ENCODE measurements at regions of chr10 and their contacts with region 1.

Region 1: DNA sequence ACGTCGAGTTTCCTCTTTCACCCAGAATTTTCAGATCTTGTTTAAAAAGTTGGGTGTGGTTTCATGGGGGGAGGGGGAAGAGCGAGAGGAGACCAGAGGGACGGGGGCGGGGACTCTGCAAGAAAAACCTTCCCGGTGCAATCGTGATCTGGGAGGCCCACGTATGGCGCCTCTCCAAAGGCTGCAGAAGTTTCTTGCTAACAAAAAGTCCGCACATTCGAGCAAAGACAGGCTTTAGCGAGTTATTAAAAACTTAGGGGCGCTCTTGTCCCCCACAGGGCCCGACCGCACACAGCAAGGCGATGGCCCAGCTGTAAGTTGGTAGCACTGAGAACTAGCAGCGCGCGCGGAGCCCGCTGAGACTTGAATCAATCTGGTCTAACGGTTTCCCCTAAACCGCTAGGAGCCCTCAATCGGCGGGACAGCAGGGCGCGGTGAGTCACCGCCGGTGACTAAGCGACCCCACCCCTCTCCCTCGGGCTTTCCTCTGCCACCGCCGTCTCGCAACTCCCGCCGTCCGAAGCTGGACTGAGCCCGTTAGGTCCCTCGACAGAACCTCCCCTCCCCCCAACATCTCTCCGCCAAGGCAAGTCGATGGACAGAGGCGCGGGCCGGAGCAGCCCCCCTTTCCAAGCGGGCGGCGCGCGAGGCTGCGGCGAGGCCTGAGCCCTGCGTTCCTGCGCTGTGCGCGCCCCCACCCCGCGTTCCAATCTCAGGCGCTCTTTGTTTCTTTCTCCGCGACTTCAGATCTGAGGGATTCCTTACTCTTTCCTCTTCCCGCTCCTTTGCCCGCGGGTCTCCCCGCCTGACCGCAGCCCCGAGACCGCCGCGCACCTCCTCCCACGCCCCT is at the start of gene VIM:
- DNase-seq: peak; percentile 90
- H3K4me3 Mint-ChIP-seq: peak within 1 kb of the TSS; percentile 80
- H3K27ac Mint-ChIP-seq: peak within 1 kb of the TSS; percentile 73
- H3K4me1 Mint-ChIP-seq: peaks cover 45% of the 10 kb centered on the region
- H3K27me3 Mint-ChIP-seq: peaks cover 2% of the 10 kb centered on the region
- total RNA-seq, gene VIM: 58.3 to 60.6 TPM

Region 2: GRCh38 chr10:16817125-16818019 is 410.9 kb before region 1 on chr10 and contains the start of gene RSU1:
- CTCF ChIA-PET with region 1: no interaction called
- intact Hi-C with region 1: loop called (anchors 1 kb)
- DNase-seq: peak; percentile 100
- H3K4me3 Mint-ChIP-seq: peak within 1 kb of the TSS; percentile 89
- H3K27ac Mint-ChIP-seq: peak within 1 kb of the TSS; percentile 90
- H3K4me1 Mint-ChIP-seq: peaks cover 23% of the 10 kb centered on the region
- H3K27me3 Mint-ChIP-seq: no peaks in the 10 kb centered on the region
- total RNA-seq, gene RSU1: 43.4 to 45.1 TPM

Region 3: GRCh38 chr10:17023386-17024298 is 204.7 kb before region 1 on chr10:
- CTCF ChIA-PET with region 1: interaction called, 3 read pairs
- intact Hi-C with region 1: loop called (anchors 1 kb)
- DNase-seq: peak; percentile 93
- H3K4me3 Mint-ChIP-seq: peak overlapping the region; percentile 7
- H3K27ac Mint-ChIP-seq: peak overlapping the region; percentile 78
- H3K4me1 Mint-ChIP-seq: peaks cover 59% of the 10 kb centered on the region
- H3K27me3 Mint-ChIP-seq: peaks cover 2% of the 10 kb centered on the region

Region 4: GRCh38 chr10:17200912-17201793 is 27.2 kb before region 1 on chr10 and contains the start of gene TRDMT1:
- CTCF ChIA-PET with region 1: interaction called, 19 read pairs
- intact Hi-C with region 1: loop called (anchors 1 kb)
- DNase-seq: peak; percentile 77
- H3K4me3 Mint-ChIP-seq: peak within 1 kb of the TSS; percentile 86
- H3K27ac Mint-ChIP-seq: peak within 1 kb of the TSS; percentile 92
- H3K4me1 Mint-ChIP-seq: peaks cover 35% of the 10 kb centered on the region
- H3K27me3 Mint-ChIP-seq: no peaks in the 10 kb centered on the region
- total RNA-seq, gene TRDMT1: 6.5 to 7.2 TPM

Region 5: DNA sequence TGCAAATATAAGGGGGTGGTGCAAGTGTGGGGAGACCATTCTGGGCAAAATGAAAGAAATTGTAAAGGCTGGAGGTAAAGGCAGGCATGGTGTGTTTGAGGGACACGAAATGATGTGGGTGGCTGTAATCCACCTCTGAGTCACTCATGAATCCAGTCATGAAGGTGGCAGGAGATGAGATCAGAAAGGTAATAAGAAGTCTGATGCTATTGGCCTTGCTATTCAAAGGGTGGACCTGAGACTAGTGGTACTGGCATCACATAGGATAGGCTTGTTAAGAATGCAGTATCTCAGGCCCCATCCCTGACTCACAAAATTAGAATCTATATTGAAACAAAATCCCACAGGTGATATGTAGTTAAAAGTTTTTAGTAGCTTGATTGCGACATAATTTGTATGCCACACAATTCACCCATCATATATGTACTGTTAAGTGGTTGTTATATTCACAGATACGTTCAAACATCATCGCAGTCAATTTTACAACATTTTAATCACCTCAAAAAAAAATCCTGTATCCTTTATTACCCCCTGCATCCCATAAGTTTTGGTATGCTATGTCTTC is 140.5 kb after region 1 on chr10:
- CTCF ChIA-PET with region 1: no interaction called
- intact Hi-C with region 1: no loop called
- DNase-seq: peak; percentile 6
- H3K4me3 Mint-ChIP-seq: no peak overlapping the region
- H3K27ac Mint-ChIP-seq: no peak overlapping the region
- H3K4me1 Mint-ChIP-seq: peaks cover 6% of the 10 kb centered on the region
- H3K27me3 Mint-ChIP-seq: no peaks in the 10 kb centered on the region

Region 6: GRCh38 chr10:17430647-17431355 is 202.5 kb after region 1 on chr10:
- CTCF ChIA-PET with region 1: no interaction called
- intact Hi-C with region 1: loop called (anchors 2 kb)
- DNase-seq: peak; percentile 79
- H3K4me3 Mint-ChIP-seq: no peak overlapping the region
- H3K27ac Mint-ChIP-seq: no peak overlapping the region
- H3K4me1 Mint-ChIP-seq: peaks cover 55% of the 10 kb centered on the region
- H3K27me3 Mint-ChIP-seq: no peaks in the 10 kb centered on the region

Region 7: DNA sequence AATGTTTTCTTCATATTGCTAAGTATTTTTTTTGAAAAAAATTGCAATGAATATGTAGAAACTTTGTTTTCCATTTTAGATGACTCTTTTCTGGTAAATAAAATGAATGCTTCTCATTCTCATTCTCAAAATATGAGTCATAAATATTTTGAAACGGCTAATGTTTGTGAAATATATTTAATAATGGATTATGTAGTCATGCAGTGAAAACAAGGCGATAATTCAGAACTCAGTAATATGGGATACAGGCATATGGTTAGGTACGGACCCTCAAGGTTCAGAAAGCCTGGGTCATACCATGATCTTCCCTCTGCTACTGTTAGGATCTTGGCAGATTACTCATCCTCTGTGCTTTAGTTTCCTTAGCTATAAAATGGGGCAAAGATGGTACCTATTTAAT is 677.2 kb after region 1 on chr10:
- CTCF ChIA-PET with region 1: no interaction called
- intact Hi-C with region 1: no loop called
- DNase-seq: no peak
- H3K4me3 Mint-ChIP-seq: no peak overlapping the region
- H3K27ac Mint-ChIP-seq: no peak overlapping the region
- H3K4me1 Mint-ChIP-seq: no peaks in the 10 kb centered on the region
- H3K27me3 Mint-ChIP-seq: peaks cover 8% of the 10 kb centered on the region

Region 8: DNA sequence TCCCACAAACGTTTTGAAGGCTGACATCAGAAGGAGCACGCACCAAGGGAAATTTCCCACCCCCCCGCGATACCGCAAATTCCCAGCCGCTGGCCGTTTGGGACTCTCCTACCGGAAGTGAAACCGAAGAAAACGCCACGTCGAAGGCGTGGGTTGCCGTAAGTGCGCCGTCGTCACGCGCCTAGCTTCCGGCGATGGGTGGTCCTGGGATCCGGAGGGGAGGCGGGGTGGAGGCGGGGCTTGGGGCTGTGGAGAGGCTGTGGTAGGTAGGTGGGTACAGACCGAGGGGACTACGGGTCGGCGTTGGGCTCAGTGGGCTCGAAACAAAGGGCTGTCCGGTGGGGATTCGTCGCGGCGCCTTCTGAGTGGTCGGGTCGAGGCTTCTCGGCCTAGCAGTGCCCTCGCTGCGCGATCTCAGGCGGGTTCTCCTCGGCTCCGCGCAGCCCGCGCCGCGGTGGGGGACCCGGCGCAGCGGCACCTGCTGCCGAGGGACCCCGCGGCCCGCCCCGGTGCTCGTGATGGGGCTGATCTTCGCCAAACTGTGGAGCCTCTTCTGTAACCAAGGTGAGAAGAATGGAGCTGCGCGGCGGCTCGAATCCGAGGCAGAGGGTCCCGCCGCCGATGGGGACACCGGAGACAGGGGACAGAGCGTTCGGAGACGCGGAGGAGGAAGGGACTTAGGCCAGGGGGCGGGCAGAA is 1431.0 kb after region 1 on chr10 and contains the start of gene ARL5B:
- CTCF ChIA-PET with region 1: no interaction called
- intact Hi-C with region 1: loop called (anchors 5 kb)
- DNase-seq: peak; percentile 97
- H3K4me3 Mint-ChIP-seq: peak within 1 kb of the TSS; percentile 93
- H3K27ac Mint-ChIP-seq: peak within 1 kb of the TSS; percentile 98
- H3K4me1 Mint-ChIP-seq: peaks cover 36% of the 10 kb centered on the region
- H3K27me3 Mint-ChIP-seq: no peaks in the 10 kb centered on the region
- total RNA-seq, gene ARL5B: 13.8 to 14.1 TPM